Activated CD4-positive, alpha-beta memory T cell treated with anti-CD3 and anti-CD28 coated beads for 36 hours (primary cell): ENCODE measurements at regions of chr3 and their contacts with region 1.

Region 1: DNA sequence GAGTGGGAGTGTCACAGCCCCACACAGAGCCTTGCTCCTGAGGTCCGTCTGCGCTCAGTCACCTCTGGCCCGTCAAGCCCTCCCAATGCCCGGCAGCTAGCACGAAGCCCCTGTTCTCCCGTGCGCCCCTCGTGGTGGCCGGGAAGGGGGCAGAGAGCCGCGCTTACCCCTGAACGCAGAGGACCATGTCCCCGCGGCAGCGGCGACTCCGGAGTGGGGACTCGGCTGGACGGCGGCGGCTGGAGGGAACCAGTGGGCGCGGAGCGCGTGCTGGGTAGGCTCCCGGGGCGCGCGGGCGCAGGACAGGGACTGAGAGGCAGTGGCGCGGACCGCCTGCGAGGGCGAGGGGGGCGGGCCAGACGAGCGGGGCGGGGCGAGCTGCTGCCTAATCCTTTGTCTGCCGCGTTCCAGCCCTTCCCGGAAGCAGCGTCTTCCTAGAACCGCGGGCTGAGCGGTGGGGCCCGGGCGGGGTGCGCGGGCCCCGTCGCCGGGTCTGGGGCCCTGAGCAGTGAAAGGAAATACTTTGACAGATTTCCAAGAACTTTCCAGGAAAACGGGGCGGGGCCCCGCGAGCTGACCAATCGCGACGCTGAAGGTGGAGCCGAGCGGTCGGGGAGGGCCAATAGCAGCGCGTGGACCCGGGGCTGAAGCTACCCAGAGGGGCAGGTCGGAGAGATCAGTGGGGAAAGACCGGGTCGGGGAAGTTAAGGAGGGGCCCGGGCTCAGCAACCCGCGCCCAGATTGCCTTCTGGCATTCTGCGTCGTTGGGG is at the start of gene CISH:
- DNase-seq: peak; percentile 99
- H3K4me3 Mint-ChIP-seq: peak within 1 kb of the TSS; percentile 98
- H3K27ac Mint-ChIP-seq: peak within 1 kb of the TSS; percentile 100
- H3K4me1 Mint-ChIP-seq: peaks cover 39% of the 10 kb centered on the region
- H3K27me3 Mint-ChIP-seq: peaks cover 6% of the 10 kb centered on the region
- total RNA-seq, gene CISH: 319 TPM

Region 2: GRCh38 chr3:50303013-50303815 is 308.4 kb before region 1 on chr3 and contains the start of gene HYAL1:
- CTCF ChIA-PET with region 1: no interaction called
- POLR2A ChIA-PET with region 1: no interaction called
- intact Hi-C with region 1: no loop called
- DNase-seq: no peak
- H3K4me3 Mint-ChIP-seq: no peak within 1 kb of the TSS
- H3K27ac Mint-ChIP-seq: no peak within 1 kb of the TSS
- H3K4me1 Mint-ChIP-seq: peaks cover 22% of the 10 kb centered on the region
- H3K27me3 Mint-ChIP-seq: no peaks in the 10 kb centered on the region
- total RNA-seq, gene HYAL1: 0.14 TPM in 1 of 2 experiments, not detected in the other

Region 3: DNA sequence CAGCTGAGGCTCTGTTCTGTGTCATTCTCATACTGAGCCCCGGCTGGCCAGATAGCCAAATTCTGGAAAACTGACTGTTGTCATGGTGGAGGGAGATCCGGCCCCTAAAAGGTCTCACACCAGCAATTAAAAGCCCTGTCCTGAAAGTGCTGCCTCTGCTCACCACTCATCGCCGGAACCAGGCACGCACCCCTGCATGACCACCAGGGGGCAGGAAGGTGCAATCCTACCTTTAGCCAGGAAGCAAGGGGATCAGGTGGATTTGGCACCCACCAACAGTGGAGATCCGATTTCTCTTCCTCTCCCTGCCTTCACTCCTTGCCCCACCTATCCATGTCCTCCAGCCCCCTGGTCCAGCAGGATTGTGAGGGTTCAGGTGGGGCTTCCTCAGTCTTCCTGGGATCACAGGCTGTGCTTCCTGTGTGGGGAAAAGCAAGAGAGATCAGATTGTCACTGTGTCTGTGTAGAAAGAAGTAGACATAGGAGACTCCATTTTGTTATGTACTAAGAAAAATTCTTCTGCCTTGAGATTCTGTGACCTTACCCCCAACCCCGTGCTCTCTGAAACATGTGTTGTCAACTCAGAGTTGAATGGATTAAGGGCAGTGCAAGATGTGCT is 92.1 kb before region 1 on chr3:
- CTCF ChIA-PET with region 1: interaction called, 12 read pairs
- POLR2A ChIA-PET with region 1: no interaction called
- intact Hi-C with region 1: loop called (anchors 1 kb)
- DNase-seq: peak; percentile 86
- H3K4me3 Mint-ChIP-seq: no peak overlapping the region
- H3K27ac Mint-ChIP-seq: no peak overlapping the region
- H3K4me1 Mint-ChIP-seq: no peaks in the 10 kb centered on the region
- H3K27me3 Mint-ChIP-seq: no peaks in the 10 kb centered on the region

Region 4: DNA sequence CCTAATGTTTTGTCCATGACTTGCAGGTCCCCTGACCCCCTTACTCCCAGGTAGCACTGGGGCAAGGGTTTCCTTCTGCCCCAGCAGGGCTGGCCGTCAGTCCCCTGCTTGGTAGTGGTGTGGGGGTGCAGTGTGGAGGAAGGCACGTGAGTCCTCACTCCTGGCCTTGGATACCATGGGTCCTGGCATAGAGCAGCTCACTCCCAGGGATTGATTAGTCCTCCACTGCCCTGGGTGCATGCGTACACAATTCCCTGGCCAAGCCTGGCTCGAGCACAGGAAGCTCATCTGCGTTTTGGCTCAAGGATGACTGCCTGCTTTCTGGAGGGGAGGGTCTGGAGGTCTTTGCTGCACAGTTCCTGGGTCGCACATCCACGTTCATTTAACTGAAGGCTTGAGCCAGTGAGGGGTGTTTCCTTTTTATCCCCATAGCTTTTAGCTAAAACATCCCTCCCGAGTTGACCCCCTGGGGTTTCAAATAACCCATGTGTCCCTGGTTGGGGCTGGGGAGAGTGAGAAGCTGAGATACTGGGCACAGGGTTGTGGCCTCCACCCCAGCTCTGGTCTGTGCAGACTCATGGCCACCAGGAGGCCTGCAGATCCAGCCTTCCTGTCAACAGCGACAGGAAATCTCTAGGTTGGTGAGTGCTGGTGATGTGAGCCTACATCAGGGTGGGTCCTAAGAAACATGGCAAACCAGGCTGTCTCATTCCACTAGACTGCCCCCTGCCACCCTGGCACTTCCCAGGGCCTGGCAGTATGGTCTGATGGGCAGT is 30.8 kb before region 1 on chr3:
- CTCF ChIA-PET with region 1: interaction called, 908 read pairs
- POLR2A ChIA-PET with region 1: interaction called, 1,013 read pairs
- intact Hi-C with region 1: no loop called
- DNase-seq: no peak
- H3K4me3 Mint-ChIP-seq: no peak overlapping the region
- H3K27ac Mint-ChIP-seq: peak overlapping the region; percentile 28
- H3K4me1 Mint-ChIP-seq: peaks cover 63% of the 10 kb centered on the region
- H3K27me3 Mint-ChIP-seq: no peaks in the 10 kb centered on the region

Region 5: DNA sequence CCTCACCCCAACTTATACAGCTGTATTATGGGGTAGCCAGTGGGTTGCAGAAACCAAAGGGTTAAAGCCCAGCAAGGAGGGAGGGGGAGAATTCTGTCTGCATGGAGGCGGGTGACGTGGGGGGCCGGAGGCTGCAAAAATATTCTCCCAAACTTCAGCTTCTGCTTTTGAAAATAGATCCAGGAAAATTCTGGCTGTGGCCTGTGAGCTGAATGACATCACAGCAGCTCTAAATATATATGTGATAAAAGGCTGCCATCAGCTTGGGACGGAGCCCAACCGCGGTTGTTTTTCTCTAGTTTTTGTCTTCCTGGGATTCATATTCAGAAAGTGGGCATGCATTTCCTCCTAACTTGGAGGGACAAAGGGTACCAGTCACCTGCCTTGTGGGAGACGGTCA is 32.9 kb after region 1 on chr3:
- CTCF ChIA-PET with region 1: interaction called, 11 read pairs
- POLR2A ChIA-PET with region 1: no interaction called
- intact Hi-C with region 1: no loop called
- DNase-seq: no peak
- H3K4me3 Mint-ChIP-seq: no peak overlapping the region
- H3K27ac Mint-ChIP-seq: no peak overlapping the region
- H3K4me1 Mint-ChIP-seq: peaks cover 14% of the 10 kb centered on the region
- H3K27me3 Mint-ChIP-seq: no peaks in the 10 kb centered on the region

Region 6: GRCh38 chr3:50737908-50738598 is 126.4 kb after region 1 on chr3:
- CTCF ChIA-PET with region 1: no interaction called
- POLR2A ChIA-PET with region 1: no interaction called
- intact Hi-C with region 1: no loop called
- DNase-seq: no peak
- H3K4me3 Mint-ChIP-seq: no peak overlapping the region
- H3K27ac Mint-ChIP-seq: no peak overlapping the region
- H3K4me1 Mint-ChIP-seq: no peaks in the 10 kb centered on the region
- H3K27me3 Mint-ChIP-seq: no peaks in the 10 kb centered on the region

Region 7: DNA sequence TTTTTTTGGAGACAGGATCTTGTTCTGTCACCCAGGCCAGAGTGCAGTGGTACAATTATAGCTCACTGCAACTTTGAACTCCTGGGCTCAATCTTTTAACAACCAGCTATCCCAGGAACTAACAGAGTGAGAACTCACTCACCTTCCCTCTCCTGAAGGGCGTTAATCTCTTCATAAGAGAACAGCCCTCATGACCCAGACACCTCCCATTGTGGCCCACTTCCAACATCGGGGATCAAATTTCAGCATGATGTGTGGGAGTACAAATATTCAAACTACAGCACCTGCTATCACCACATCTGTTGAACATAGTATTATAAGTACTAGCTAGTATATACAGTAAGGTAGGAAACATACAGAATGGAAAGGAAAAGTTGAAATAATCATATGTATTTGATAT is 195.6 kb after region 1 on chr3:
- CTCF ChIA-PET with region 1: no interaction called
- POLR2A ChIA-PET with region 1: no interaction called
- intact Hi-C with region 1: no loop called
- DNase-seq: no peak
- H3K4me3 Mint-ChIP-seq: no peak overlapping the region
- H3K27ac Mint-ChIP-seq: no peak overlapping the region
- H3K4me1 Mint-ChIP-seq: no peaks in the 10 kb centered on the region
- H3K27me3 Mint-ChIP-seq: no peaks in the 10 kb centered on the region

Region 8: DNA sequence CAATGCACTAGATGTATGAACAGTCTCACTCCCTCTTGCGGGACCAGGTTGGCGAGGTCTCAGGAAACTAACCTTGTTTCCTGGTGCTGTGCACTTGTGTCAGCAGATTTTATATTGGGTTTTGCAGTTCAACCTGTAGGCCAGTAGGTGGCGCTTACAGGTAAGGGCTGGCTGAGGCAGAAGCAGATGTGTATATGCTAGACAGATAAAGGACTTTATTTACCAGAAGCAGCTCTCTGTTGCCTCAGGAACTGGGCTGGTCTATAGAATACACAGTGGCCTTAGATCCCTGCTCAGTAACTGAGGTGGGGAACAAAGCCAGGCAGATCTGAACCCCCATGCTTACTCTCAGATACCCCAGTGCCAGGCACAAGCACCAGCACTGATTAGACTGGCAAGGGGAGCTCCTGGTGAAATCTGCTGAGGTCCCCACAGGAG is 359.9 kb after region 1 on chr3:
- CTCF ChIA-PET with region 1: interaction called, 8 read pairs
- POLR2A ChIA-PET with region 1: no interaction called
- intact Hi-C with region 1: loop called (anchors 5 kb)
- DNase-seq: peak; percentile 61
- H3K4me3 Mint-ChIP-seq: no peak overlapping the region
- H3K27ac Mint-ChIP-seq: no peak overlapping the region
- H3K4me1 Mint-ChIP-seq: peaks cover 12% of the 10 kb centered on the region
- H3K27me3 Mint-ChIP-seq: no peaks in the 10 kb centered on the region

Region 9: DNA sequence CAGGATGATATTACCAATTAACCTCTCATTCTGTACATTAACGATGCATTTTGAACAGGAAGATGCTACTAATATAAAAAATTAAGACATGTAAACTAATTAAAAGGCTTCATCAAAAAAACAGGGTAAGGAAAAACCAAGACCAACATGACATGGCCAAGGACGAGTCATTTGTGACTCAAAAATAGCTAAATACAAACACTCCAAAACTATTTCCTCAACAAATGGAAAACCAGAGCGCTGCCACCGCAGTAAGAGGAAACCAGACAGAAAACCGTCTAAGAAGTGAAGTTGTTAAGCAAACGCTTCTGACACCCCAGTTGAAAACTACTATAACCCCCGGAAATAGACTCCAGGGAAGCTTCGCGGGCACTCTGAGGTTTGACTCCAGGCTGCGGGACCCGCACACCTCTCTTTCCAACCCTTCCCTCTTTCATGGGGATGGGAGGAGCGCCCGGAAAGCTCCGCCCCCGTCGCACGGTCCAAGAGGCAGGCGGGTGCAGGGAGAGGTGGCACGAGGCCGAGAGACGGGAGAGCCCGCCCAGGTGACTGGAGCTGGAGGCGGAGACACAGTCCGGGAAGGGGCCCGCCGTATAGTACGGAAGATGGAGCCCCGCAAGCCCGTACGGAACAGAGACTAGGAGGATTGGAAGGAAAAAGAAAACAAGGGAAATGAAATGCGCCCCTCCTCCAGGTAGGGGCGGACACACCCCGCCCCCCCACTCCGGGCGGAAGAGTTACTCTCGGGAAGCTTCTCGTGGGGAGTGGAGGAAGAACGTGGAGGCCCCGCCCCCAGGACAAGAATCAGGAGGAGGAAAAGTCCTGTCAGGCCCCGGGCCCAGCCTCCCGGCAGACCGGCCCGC is 887.5 kb after region 1 on chr3:
- CTCF ChIA-PET with region 1: interaction called, 4 read pairs
- POLR2A ChIA-PET with region 1: no interaction called
- intact Hi-C with region 1: loop called (anchors 5 kb)
- DNase-seq: peak; percentile 93
- H3K4me3 Mint-ChIP-seq: peak overlapping the region; percentile 82
- H3K27ac Mint-ChIP-seq: peak overlapping the region; percentile 94
- H3K4me1 Mint-ChIP-seq: peaks cover 11% of the 10 kb centered on the region
- H3K27me3 Mint-ChIP-seq: peaks cover 1% of the 10 kb centered on the region